Activated T-helper 1 cell treated with anti-CD3 and anti-CD28 coated beads, Interleukin-12 subunit alpha, Interleukin-12 subunit beta, Interleukin-2, Interleukin-4 antibody, amounts not matched to agents 30 ng/mL and 10 ng/mL and 1 ng/mL, durations not matched to agents 14 hours and 24 hours and 36 hours (primary cell): ENCODE measurements at regions of chr3 and their contacts with region 1.

Region 1: DNA sequence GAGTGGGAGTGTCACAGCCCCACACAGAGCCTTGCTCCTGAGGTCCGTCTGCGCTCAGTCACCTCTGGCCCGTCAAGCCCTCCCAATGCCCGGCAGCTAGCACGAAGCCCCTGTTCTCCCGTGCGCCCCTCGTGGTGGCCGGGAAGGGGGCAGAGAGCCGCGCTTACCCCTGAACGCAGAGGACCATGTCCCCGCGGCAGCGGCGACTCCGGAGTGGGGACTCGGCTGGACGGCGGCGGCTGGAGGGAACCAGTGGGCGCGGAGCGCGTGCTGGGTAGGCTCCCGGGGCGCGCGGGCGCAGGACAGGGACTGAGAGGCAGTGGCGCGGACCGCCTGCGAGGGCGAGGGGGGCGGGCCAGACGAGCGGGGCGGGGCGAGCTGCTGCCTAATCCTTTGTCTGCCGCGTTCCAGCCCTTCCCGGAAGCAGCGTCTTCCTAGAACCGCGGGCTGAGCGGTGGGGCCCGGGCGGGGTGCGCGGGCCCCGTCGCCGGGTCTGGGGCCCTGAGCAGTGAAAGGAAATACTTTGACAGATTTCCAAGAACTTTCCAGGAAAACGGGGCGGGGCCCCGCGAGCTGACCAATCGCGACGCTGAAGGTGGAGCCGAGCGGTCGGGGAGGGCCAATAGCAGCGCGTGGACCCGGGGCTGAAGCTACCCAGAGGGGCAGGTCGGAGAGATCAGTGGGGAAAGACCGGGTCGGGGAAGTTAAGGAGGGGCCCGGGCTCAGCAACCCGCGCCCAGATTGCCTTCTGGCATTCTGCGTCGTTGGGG is at the start of gene CISH:
- DNase-seq: peak; percentile 98
- H3K4me3 Mint-ChIP-seq: peak within 1 kb of the TSS; percentile 99
- H3K27ac Mint-ChIP-seq: peak within 1 kb of the TSS; percentile 98
- H3K4me1 Mint-ChIP-seq: peaks cover 55% of the 10 kb centered on the region
- H3K27me3 Mint-ChIP-seq: no peaks in the 10 kb centered on the region
- total RNA-seq, gene CISH: 334 and 341 TPM in 2 replicates

Region 2: DNA sequence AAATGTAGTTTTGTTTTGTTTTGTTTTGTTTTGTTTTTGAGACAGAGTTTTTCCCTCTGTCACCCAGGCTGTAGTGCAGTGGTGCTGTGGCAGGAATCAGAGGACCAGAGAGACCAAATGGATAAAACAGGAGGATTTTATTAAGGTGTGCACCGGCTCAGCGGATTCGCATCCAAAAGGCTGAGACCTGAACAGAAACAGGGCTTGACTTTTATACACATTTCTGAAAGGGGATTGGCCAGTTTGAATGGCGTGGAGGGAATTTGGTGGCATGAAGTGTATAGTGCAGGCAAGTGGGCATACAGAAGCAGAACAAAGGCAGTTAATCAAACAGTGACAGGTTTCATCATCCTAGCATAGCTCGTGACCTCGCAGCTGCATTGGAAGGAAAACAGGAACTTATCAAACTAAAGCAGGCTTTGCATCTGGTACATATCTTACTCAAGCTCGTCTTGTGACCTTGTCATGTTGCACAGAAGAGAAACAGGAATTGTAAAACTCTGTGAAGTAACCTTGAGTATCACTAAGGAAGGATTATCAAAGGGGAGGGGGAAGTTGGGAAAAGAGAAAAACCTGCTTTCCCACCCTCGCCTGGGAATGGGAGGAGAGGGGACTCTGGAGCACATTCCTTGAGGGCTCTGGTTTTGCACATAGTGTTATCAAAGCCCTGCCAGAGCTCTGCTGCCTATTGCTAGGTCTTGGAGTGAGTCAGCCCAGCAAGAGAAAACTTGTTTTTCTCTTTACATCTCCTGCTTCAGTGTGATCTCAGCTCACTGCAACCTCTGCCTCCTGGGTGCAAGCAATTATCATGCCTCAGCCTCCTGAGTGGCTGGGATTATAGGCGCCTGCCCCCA is 1373.1 kb before region 1 on chr3:
- intact Hi-C with region 1: no loop called
- DNase-seq: no peak
- H3K4me3 Mint-ChIP-seq: no peak overlapping the region
- H3K27ac Mint-ChIP-seq: no peak overlapping the region
- H3K4me1 Mint-ChIP-seq: no peaks in the 10 kb centered on the region
- H3K27me3 Mint-ChIP-seq: peaks cover 3% of the 10 kb centered on the region

Region 3: GRCh38 chr3:50350527-50351322 is 260.9 kb before region 1 on chr3 and contains the starts of genes CYB561D2 and NPRL2:
- intact Hi-C with region 1: loop called (anchors 2 kb)
- DNase-seq: peak; percentile 100
- H3K4me3 Mint-ChIP-seq: peak within 1 kb of the TSS; percentile 95
- H3K27ac Mint-ChIP-seq: peak within 1 kb of the TSS; percentile 95
- H3K4me1 Mint-ChIP-seq: peaks cover 55% of the 10 kb centered on the region
- H3K27me3 Mint-ChIP-seq: no peaks in the 10 kb centered on the region
- total RNA-seq, gene CYB561D2: 30.0 and 35.9 TPM in 2 replicates
- total RNA-seq, gene NPRL2: 43.7 and 46.6 TPM in 2 replicates

Region 4: DNA sequence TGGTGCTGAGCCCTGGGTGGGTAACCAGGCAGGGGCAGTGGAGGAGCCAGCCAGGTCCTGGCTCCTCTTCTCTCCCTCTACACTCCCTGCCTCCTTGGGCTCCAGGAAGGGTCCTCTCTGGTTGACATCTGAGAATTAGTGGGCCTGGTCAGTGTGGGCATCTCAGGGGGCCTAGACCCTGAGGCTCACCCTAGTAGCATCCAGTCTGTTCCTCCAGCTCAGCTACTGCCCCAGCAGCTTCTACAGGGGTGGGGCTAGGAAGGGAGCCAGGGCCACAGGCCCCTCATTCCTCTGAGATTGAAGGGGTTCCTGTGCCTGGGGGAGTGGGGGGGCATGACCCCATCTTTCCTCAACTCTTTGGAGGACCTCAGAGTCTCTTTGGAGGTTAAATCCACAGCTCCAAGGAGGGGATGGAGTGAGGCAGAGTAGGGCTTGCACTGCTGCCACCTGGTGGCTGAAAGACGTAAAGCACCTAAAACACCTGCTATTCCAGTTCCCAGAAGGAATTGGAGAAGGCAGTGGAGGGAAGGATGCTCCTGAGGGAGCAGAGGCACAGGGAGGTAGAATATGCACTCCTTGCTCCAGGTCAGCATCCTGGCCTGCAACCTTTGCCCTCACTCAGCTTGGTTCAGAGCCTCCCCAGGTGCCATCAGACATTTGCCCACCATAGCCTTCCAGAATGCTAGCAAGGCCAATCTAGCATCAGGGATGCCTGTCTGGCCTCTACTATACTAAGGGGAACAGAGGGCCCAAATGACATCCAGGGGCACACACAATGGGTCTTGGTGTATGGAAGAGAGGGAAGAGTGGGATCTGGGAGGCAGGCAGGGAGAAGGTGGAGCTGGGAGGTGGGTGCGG is 69.2 kb before region 1 on chr3:
- intact Hi-C with region 1: loop called (anchors 1 kb)
- DNase-seq: peak; percentile 28
- H3K4me3 Mint-ChIP-seq: no peak overlapping the region
- H3K27ac Mint-ChIP-seq: no peak overlapping the region
- H3K4me1 Mint-ChIP-seq: no peaks in the 10 kb centered on the region
- H3K27me3 Mint-ChIP-seq: peaks cover 19% of the 10 kb centered on the region

Region 5: DNA sequence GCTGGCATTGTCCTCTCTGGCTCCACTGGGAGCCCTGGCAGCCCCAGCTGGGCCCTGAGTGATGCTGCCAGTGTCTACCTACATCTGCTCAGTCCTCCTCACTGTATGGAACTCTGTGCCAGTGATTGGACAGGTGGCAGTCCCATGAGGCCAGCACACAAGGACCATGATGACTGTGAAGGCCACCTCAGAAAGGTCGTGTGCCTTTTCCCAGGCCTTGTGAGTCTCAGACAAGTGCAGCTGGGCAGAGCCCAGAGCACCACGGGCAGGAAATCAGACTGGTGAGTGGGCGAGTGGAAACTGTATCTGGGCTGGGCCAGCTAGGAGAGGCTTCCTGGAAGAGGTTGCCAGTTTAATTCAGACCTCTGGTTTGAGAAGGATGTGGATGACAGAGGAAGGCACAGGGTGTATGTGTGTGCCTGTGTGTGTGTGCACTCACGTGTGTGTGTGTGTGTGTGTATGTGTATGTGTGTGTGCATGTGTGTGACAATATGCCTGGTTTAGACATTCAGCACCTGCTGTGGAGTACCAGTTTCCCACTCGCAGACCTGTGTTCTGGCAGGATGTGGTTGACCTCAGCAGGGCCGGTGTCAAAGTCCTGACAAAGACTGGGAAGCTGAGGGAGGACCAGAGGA is 12.3 kb after region 1 on chr3:
- intact Hi-C with region 1: loop called (anchors 1 kb)
- DNase-seq: no peak
- H3K4me3 Mint-ChIP-seq: peak overlapping the region; percentile 65
- H3K27ac Mint-ChIP-seq: peak overlapping the region; percentile 93
- H3K4me1 Mint-ChIP-seq: peaks cover 90% of the 10 kb centered on the region
- H3K27me3 Mint-ChIP-seq: peaks cover 1% of the 10 kb centered on the region

Region 6: DNA sequence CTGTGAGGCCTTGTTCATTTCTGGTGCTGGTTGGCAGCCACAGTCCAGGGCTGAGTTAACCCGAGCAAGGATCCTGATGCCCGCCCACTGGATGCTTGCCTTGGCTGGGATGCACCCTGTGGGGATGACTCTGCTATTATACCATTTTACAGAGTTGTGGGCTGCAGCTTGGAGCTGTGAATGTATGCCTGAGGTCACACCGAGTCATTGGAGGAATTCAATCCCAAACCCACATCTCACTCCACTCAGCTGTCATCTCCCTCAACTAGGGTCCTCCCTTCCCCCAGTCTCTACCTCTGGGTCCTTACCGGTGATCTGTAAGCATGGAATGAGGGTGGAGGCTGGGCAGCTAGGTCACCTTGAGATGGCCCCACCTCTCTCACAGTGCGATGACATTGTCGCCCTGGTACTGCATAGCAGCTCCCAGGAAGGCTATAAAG is 27.4 kb after region 1 on chr3:
- intact Hi-C with region 1: no loop called
- DNase-seq: no peak
- H3K4me3 Mint-ChIP-seq: no peak overlapping the region
- H3K27ac Mint-ChIP-seq: peak overlapping the region; percentile 82
- H3K4me1 Mint-ChIP-seq: peaks cover 54% of the 10 kb centered on the region
- H3K27me3 Mint-ChIP-seq: no peaks in the 10 kb centered on the region

Region 7: GRCh38 chr3:50971487-50971924 is 359.9 kb after region 1 on chr3:
- intact Hi-C with region 1: loop called (anchors 1 kb)
- DNase-seq: peak; percentile 60
- H3K4me3 Mint-ChIP-seq: no peak overlapping the region
- H3K27ac Mint-ChIP-seq: no peak overlapping the region
- H3K4me1 Mint-ChIP-seq: peaks cover 20% of the 10 kb centered on the region
- H3K27me3 Mint-ChIP-seq: no peaks in the 10 kb centered on the region

Region 8: GRCh38 chr3:51391075-51391567 is 779.5 kb after region 1 on chr3 and contains the start of gene RBM15B:
- intact Hi-C with region 1: loop called (anchors 1 kb)
- DNase-seq: peak; percentile 98
- H3K4me3 Mint-ChIP-seq: peak within 1 kb of the TSS; percentile 85
- H3K27ac Mint-ChIP-seq: peak within 1 kb of the TSS; percentile 86
- H3K4me1 Mint-ChIP-seq: peaks cover 66% of the 10 kb centered on the region
- H3K27me3 Mint-ChIP-seq: no peaks in the 10 kb centered on the region
- total RNA-seq, gene RBM15B: 38.5 and 39.6 TPM in 2 replicates